MCF 10A (cell line): ENCODE measurements at regions of chr10 and their contacts with region 1.

Region 1: DNA sequence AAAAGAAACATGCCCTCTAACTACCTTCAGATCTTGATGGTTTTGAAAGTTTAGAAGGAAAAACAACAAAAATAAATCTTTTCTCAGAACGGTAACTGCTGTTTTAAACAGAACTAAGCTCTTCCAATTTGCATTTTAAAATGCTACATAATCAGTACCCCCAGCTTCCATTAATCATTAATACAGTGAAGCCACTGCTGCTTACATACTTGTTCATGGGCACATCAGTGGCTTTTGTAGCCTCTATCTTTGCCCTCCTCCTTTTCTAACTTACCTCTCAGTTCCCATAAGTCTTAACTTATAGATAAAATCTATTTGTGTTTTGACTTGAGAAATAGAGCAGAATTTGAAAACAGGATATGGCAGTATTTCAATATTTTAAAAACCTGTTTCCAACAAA is 109.1 kb downstream of the POLL start:
- DNase-seq: no peak
- H3K4me3 Mint-ChIP-seq: no peak overlapping the region
- H3K27ac Mint-ChIP-seq: no peak overlapping the region
- H3K4me1 Mint-ChIP-seq: no peaks in the 10 kb centered on the region
- H3K27me3 Mint-ChIP-seq: no peaks in the 10 kb centered on the region
- CTCF ChIP-seq: no peak

Region 2: DNA sequence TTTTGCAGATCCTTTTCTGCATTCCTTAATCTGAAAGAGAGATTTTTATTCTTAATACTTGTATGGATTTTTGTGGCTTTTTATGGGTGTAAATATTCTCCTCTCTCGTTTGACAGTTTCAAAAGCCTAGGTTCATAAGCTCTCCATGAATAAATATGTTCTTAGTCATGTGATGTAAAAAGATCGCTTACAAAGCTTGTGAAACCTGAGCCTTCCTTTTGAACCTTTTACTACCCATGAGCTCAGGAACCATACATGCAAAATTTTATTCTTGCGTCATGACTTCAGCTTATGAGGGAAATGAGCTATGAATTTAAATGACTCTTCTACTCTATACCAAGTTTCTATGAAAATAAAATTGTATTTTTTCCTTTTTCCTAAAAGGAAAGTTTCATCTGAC is 10.4 kb after region 1 on chr10:
- CTCF ChIA-PET with region 1: interaction called, 5 read pairs
- POLR2A ChIA-PET with region 1: interaction called, 13 read pairs
- intact Hi-C with region 1: no loop called
- DNase-seq: peak; percentile 59
- H3K4me3 Mint-ChIP-seq: no peak overlapping the region
- H3K27ac Mint-ChIP-seq: no peak overlapping the region
- H3K4me1 Mint-ChIP-seq: peaks cover 17% of the 10 kb centered on the region
- H3K27me3 Mint-ChIP-seq: no peaks in the 10 kb centered on the region
- CTCF ChIP-seq: no peak